ENCODE measurements at regions of chr16 and their contacts with region 1.

Region 1: GRCh38 chr16:58249780-58250478 is 44.9 kb downstream of the PRSS54 start:
- DNase-seq: peak; percentile 92
- ATAC-seq: peak; percentile 98
- H3K4me3 Mint-ChIP-seq: peak overlapping the region; percentile 81
- H3K27ac Mint-ChIP-seq: peak overlapping the region; percentile 85
- H3K4me1 Mint-ChIP-seq: peaks cover 8% of the 10 kb centered on the region
- H3K27me3 Mint-ChIP-seq: no peaks in the 10 kb centered on the region

Region 2: GRCh38 chr16:57984331-57985203 is 265.4 kb before region 1 on chr16:
- CTCF ChIA-PET with region 1: no interaction called
- POLR2A ChIA-PET with region 1: no interaction called
- intact Hi-C with region 1: loop called in 1 of 2 experiments (anchors 1 kb)
- DNase-seq: peak; percentile 97
- ATAC-seq: peak; percentile 100
- H3K4me3 Mint-ChIP-seq: peak overlapping the region; percentile 76
- H3K27ac Mint-ChIP-seq: no peak overlapping the region
- H3K4me1 Mint-ChIP-seq: peaks cover 7% of the 10 kb centered on the region
- H3K27me3 Mint-ChIP-seq: no peaks in the 10 kb centered on the region

Region 3: DNA sequence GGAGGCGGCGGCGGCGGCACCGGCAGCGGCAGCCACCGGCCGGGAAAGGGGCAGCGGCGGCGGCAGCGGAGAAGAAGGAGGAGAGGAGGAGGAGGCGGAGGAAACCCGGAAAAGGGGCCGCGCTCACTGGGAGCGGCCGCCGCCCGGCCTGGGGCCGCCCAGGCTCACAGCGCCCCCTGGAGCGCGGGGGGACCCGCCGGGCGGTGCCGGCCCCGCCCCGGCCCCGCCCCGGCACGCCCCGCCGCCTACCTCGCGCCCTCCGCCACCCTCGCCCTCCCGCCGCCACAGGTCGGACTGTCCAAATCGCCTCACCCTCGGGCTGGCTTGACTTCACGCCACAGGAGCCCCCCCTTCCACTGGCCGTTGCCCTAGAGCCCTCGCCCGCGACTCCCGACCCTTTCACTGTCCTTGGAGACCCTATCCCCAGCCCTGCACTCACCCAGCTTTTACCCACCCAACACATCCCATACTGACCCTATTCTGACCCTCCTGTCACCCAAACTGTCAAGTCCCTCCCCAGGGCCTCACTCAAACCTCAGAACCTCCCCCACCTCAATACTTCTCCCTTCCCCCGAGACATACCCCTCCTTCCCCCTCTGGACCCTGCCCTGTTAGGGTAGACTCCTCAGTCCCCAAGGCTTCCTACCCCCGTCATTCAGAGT is 51.8 kb before region 1 on chr16 and contains the start of gene CSNK2A2:
- CTCF ChIA-PET with region 1: interaction called, 4 read pairs
- POLR2A ChIA-PET with region 1: no interaction called
- intact Hi-C with region 1: loop called in 1 of 2 experiments (anchors 1 kb)
- DNase-seq: peak; percentile 84
- ATAC-seq: peak; percentile 94
- H3K4me3 Mint-ChIP-seq: peak within 1 kb of the TSS; percentile 84
- H3K27ac Mint-ChIP-seq: peak within 1 kb of the TSS; percentile 74
- H3K4me1 Mint-ChIP-seq: peaks cover 34% of the 10 kb centered on the region
- H3K27me3 Mint-ChIP-seq: peaks cover 6% of the 10 kb centered on the region
- total RNA-seq, gene CSNK2A2: 85.9 to 92.2 TPM

Region 4: GRCh38 chr16:58912571-58912970 is 662.6 kb after region 1 on chr16:
- CTCF ChIA-PET with region 1: no interaction called
- POLR2A ChIA-PET with region 1: no interaction called
- intact Hi-C with region 1: no loop called
- DNase-seq: no peak
- ATAC-seq: no peak
- H3K4me3 Mint-ChIP-seq: no peak overlapping the region
- H3K27ac Mint-ChIP-seq: no peak overlapping the region
- H3K4me1 Mint-ChIP-seq: no peaks in the 10 kb centered on the region
- H3K27me3 Mint-ChIP-seq: no peaks in the 10 kb centered on the region